ENCODE measurements at regions of chr21 and their contacts with region 1.

Region 1: GRCh38 chr21:45363921-45364467 is 41.0 kb upstream of the COL18A1 start:
- DNase-seq: peak; percentile 48
- H3K4me3 ChIP-seq: no peak overlapping the region
- H3K27ac ChIP-seq: peak overlapping the region; percentile 74 to 77
- H3K4me1 ChIP-seq: no peaks in the 10 kb centered on the region
- H3K27me3 ChIP-seq: no peaks in the 10 kb centered on the region
- CTCF ChIP-seq: no peak
- POLR2A ChIP-seq: no peak

Region 2: DNA sequence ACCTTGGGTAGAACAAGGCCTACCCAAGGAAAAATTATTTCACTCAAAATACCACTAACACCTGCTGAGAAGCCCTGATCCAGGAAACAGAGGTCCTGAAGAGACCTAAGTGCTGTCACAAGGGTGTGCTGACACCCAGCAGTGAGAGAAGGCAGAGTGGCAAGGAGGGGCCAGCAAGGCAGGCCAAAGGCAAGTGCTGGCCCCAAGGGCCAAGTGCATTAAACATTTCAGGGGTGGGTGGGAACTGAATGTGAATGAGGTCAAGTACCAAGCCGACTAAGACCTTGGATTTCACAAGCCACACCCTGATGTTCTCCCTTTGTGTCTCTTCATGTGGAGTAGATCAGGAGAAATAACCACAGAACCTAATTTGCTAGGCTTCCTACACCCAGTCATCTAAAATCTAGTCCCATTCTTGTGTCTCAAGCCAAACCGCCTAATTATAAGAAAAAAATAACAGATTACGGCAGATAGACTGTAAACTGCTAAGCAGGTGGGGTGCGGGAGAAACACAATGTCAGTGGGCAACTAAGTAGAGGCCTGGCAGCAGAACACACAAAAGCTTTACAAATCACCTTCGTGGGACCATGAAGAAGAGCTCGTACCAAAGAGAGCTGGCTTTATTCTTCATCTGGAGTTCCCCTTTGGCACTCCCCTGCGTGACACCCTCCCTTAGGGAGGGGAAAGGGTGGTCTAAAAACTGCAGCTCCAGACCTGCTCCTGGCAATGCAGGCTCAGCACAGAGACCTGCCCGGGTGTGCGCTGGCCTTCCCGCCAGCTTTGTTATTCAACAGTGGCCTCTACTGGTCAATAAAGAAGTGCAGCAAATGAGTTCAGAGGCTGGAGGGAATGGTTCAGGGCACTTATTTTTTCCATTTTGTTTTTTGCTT is 571.0 kb before region 1 on chr21:
- intact Hi-C with region 1: no loop called
- DNase-seq: peak; percentile 47
- H3K4me3 ChIP-seq: no peak overlapping the region
- H3K27ac ChIP-seq: no peak overlapping the region
- H3K4me1 ChIP-seq: no peaks in the 10 kb centered on the region
- H3K27me3 ChIP-seq: no peaks in the 10 kb centered on the region
- CTCF ChIP-seq: peak; percentile 48 to 80 (median 70)
- POLR2A ChIP-seq: no peak

Region 3: GRCh38 chr21:45287438-45288391 is 76.3 kb before region 1 on chr21 and contains the start of gene POFUT2:
- intact Hi-C with region 1: no loop called
- DNase-seq: peak; percentile 94
- H3K4me3 ChIP-seq: peak within 1 kb of the TSS; percentile 71 to 90
- H3K27ac ChIP-seq: peak within 1 kb of the TSS; percentile 67 to 76
- H3K4me1 ChIP-seq: peaks cover 11% of the 10 kb centered on the region
- H3K27me3 ChIP-seq: no peaks in the 10 kb centered on the region
- CTCF ChIP-seq: peak in 2 of 4 experiments; percentile 41 to 43
- POLR2A ChIP-seq: peak; percentile 86
- total RNA-seq, gene POFUT2: 20.2 to 52.4 TPM

Region 4: GRCh38 chr21:45309069-45309986 is 54.7 kb before region 1 on chr21:
- intact Hi-C with region 1: loop called (anchors 5 kb)
- DNase-seq: no peak
- H3K4me3 ChIP-seq: no peak overlapping the region
- H3K27ac ChIP-seq: peak overlapping the region; percentile 19 to 29
- H3K4me1 ChIP-seq: no peaks in the 10 kb centered on the region
- H3K27me3 ChIP-seq: peaks cover 5% of the 10 kb centered on the region
- CTCF ChIP-seq: peak in 2 of 4 experiments; percentile 23 to 41
- POLR2A ChIP-seq: no peak

Measured in prostate gland (tissue), 2 donors.